Activated B cell treated with CpG ODN at 0.5 μM for 24 hours (primary cell): ENCODE measurements at regions of chr10 and their contacts with region 1.

Region 1: GRCh38 chr10:100730725-100731406 is 14.5 kb upstream of the PAX2 start:
- DNase-seq: no peak
- ATAC-seq: peak; percentile 85
- H3K4me3 Mint-ChIP-seq: peak overlapping the region; percentile 78
- H3K27ac Mint-ChIP-seq: no peak overlapping the region
- H3K4me1 Mint-ChIP-seq: peaks cover 28% of the 10 kb centered on the region
- H3K27me3 Mint-ChIP-seq: peaks cover 78% of the 10 kb centered on the region
- CTCF ChIP-seq: no peak

Region 2: DNA sequence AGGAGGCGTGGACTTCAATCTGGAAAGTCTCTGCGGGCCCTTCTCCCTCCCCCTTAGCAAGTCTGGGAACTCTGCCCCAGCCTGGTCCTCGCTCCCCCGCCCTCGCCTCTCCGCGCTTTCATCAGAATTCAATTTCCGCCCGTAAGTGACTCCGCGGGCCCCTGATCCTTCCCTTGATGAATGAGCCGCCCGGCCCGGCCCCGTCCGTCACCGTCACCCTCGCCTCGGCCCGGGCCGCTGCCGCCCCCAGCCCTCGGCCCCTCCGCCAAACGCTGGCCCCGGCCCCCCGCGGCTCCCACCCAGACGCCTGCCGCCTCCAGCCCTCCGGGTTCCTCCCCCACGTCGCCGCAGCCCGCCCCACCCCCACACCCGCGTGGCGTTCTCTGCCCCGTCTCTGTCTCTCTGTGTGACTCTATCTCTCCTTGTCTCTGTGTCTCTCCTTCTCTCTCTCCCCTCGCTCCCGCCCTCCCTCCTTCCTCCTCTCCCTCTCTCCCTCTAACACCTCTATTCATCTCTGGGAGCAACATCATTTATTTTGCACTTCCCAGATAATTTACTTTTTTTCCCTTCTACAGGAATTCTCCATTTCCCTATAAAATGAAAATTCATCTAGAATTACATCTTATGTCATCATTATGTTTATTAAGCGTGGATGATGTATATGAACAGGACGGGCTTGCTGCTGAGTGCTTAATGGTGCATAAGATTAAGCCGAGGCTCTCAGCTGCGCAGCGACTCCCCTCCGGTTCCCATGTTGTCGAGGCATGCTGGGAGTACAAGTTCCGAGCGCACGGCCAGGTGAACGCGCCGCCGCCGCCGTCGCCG is 76.7 kb before region 1 on chr10:
- CTCF ChIA-PET with region 1: no interaction called
- POLR2A ChIA-PET with region 1: no interaction called
- intact Hi-C with region 1: loop called (anchors 5 kb)
- DNase-seq: no peak
- ATAC-seq: peak; percentile 28
- H3K4me3 Mint-ChIP-seq: peak overlapping the region; percentile 70
- H3K27ac Mint-ChIP-seq: no peak overlapping the region
- H3K4me1 Mint-ChIP-seq: peaks cover 25% of the 10 kb centered on the region
- H3K27me3 Mint-ChIP-seq: peaks cover 62% of the 10 kb centered on the region
- CTCF ChIP-seq: no peak

Region 3: DNA sequence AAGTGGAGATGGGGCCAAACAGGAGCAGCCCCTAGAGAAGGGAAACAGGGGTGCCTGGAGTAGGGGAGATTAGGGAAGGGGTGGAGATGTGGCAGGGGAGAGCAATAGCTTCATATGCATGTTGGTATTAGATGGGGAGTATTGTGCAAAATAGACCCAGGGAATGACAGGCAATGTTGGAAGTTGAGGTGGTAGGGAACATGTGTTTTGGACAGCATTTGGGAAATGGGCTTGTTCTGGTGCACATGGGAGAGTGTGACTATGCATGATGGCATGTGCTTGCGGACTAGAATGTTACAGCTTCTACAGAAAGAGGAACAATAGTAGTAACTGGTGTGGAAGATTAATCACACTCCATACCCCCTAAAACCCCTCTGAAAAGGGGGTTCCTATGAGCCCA is 25.0 kb after region 1 on chr10:
- CTCF ChIA-PET with region 1: no interaction called
- POLR2A ChIA-PET with region 1: no interaction called
- intact Hi-C with region 1: no loop called
- DNase-seq: no peak
- ATAC-seq: no peak
- H3K4me3 Mint-ChIP-seq: no peak overlapping the region
- H3K27ac Mint-ChIP-seq: no peak overlapping the region
- H3K4me1 Mint-ChIP-seq: no peaks in the 10 kb centered on the region
- H3K27me3 Mint-ChIP-seq: peaks cover 87% of the 10 kb centered on the region
- CTCF ChIP-seq: no peak

Region 4: GRCh38 chr10:101161494-101162299 is 430.8 kb after region 1 on chr10:
- CTCF ChIA-PET with region 1: no interaction called
- POLR2A ChIA-PET with region 1: interaction called, 14 read pairs
- intact Hi-C with region 1: no loop called
- DNase-seq: peak; percentile 47
- ATAC-seq: peak; percentile 94
- H3K4me3 Mint-ChIP-seq: no peak overlapping the region
- H3K27ac Mint-ChIP-seq: no peak overlapping the region
- H3K4me1 Mint-ChIP-seq: peaks cover 15% of the 10 kb centered on the region
- H3K27me3 Mint-ChIP-seq: peaks cover 59% of the 10 kb centered on the region
- CTCF ChIP-seq: peak; percentile 32